Right ventricle myocardium superior (tissue), 1 donor: ENCODE measurements at regions of chr22 and their contacts with region 1.

Region 1: GRCh38 chr22:25582946-25583345 is 18.5 kb downstream of the GRK3 start:
- DNase-seq: no peak
- ATAC-seq: no peak

Region 2: DNA sequence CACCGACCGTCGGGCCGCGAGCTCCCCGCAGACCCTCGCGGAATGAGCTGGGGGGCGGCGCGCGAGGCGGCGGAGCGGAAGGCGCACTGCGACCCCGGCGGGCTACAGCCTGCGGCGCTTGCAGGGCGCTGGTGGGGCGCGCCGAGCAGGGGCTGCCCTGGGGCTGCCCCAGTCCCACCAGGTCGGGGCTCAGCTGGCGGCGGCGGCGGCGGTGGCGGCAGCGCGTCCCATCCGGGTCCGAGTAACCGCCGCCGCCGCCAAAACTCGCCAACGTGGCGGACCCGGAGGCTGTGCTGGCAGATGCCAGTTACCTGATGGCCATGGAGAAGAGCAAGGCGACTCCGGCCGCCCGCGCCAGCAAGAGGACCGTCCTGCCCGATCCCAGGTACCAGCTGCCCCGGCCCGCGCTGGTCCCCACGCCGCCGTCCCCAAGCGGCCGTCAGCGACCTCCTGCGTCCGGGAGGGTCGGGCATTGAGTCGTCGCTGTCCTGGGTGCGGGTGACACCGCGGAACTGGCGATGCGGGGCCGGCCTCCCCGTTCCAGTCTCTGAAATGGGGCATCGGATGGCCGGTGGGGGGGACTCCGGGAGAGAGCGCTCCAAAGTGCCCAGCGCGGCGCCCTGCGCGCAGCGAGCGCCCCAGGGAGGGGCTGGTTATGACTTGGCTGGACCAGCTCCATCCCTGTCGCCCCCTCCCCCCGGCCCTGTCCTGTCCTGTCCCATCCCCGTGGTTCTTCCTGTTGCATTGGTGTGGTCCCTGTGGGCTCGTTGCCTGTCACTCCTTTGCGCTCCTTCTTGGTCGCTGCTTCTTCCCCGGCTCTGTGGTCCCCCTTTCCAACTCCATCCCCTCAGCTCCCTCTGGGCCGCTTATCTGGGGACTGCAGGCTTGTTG is 300.0 kb before region 1 on chr22:
- intact Hi-C with region 1: loop called (anchors 10 kb)
- DNase-seq: no peak
- ATAC-seq: no peak